ENCODE measurements at regions of chr13 and their contacts with region 1.

Region 1: GRCh38 chr13:67224148-67224846 is 5.8 kb downstream of the PCDH9 start:
- DNase-seq: peak; percentile 89
- ATAC-seq: peak; percentile 84

Region 2: DNA sequence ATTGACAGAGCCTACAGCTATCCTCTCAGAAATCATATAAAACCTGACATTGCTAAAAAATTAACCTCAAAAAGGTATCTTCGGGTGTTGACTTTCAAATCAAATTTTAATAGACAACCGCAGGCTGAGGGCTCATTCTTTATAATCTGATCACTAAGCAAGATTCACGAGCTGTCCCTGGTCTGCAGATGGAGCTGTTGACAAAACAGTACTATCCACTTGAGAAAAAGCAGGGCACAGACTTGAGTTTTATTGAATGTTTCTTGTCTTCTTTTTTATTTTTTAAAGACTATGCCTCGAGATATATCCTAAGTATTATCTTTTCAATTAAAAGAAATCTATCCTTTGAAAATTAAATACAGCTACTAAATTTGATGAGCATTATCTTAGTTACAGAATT is 534.7 kb before region 1 on chr13:
- intact Hi-C with region 1: loop called (anchors 5 kb)
- DNase-seq: no peak
- ATAC-seq: no peak

Region 3: DNA sequence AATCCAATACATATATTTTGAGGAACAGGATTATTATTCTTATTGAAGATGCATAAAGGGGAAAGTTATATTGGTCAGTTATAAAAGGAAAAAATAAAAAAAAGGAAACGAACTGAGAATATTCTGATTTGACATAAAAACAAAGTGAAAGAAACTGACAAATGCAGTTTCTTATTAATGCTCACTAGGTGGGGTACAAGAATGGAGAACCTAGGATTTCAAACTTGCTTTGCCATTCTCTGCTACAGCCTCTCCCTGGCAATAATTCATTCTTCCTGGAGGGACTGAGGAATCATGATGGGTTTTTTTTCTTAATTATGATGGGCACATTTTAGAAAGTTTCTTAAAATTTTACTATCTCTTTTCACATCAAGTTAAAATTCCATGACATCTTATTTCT is 149.1 kb before region 1 on chr13:
- intact Hi-C with region 1: loop called (anchors 1 kb)
- DNase-seq: no peak
- ATAC-seq: peak; percentile 54

Region 4: GRCh38 chr13:67147342-67148133 is 76.8 kb before region 1 on chr13:
- intact Hi-C with region 1: loop called (anchors 5 kb)
- DNase-seq: no peak
- ATAC-seq: peak; percentile 89

Region 5: GRCh38 chr13:67408798-67409197 is 184.5 kb after region 1 on chr13:
- intact Hi-C with region 1: no loop called
- DNase-seq: no peak
- ATAC-seq: peak; percentile 34

Measured in Right ventricle myocardium inferior (tissue), 1 donor.